Panc1 (cell line): ENCODE measurements at regions of chr20 and their contacts with region 1.

Region 1: GRCh38 chr20:34150306-34151000 is 38.4 kb upstream of the EIF2S2 start:
- DNase-seq: no peak
- ATAC-seq: no peak
- H3K4me3 ChIP-seq: no peak overlapping the region
- H3K27ac ChIP-seq: no peak overlapping the region
- H3K4me1 ChIP-seq: no peaks in the 10 kb centered on the region
- H3K27me3 ChIP-seq: no peaks in the 10 kb centered on the region
- CTCF ChIP-seq: no peak

Region 2: DNA sequence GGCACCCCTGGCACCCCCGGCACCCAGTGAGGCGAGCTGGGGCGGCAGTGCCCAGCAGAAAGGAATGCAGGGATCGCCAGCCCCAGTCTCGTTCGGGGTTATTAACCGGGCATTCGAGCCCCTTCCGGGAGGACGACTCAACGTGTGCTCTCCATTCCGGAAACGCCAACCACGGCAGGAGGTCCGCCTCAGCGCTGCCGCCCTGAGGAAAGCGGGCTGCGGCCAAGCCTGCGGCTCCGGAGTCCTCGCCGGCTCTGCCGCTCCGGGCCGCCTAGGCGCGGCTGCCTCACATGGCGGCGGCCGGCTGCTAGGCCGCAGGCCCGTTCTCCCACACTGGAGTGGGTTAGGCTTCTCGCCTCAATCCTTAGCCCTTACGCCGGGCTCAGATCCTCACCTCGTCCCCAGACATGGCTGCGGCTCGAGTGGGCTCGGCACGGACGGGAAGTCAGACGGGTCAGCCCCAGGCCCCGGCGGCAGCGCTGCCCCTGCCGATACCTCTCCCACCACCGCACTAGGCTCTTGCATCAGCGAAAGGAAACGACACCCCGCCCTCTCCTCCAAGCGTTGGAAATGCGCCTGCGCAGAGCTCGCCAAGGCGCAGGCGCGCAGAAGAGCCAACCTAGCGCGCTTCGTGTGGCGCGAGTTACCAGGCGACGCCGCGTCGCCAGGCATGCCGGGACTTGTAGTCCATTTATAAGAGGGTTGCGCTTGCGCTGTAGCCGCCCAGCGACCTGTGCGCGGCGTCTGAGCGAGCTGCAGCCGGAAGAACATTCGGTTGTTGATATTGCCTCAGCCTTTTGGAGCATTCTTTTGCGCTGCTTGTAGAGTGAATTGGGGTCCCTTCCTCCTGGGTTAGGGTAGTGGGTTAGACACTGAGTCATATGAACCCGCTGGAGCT is 38.5 kb before region 1 on chr20 and contains the start of gene EIF2S2:
- CTCF ChIA-PET with region 1: interaction called, 10 read pairs
- POLR2A ChIA-PET with region 1: no interaction called
- in situ Hi-C with region 1: no loop called
- intact Hi-C with region 1: no loop called
- DNase-seq: peak; percentile 96
- ATAC-seq: peak; percentile 96
- H3K4me3 ChIP-seq: peak within 1 kb of the TSS; percentile 79 to 99
- H3K27ac ChIP-seq: peak within 1 kb of the TSS; percentile 98
- H3K4me1 ChIP-seq: peaks cover 22% of the 10 kb centered on the region; the same call in 1 of the 2 replicates
- H3K27me3 ChIP-seq: no peaks in the 10 kb centered on the region
- CTCF ChIP-seq: no peak
- total RNA-seq, gene EIF2S2: 82.0 TPM

Region 3: DNA sequence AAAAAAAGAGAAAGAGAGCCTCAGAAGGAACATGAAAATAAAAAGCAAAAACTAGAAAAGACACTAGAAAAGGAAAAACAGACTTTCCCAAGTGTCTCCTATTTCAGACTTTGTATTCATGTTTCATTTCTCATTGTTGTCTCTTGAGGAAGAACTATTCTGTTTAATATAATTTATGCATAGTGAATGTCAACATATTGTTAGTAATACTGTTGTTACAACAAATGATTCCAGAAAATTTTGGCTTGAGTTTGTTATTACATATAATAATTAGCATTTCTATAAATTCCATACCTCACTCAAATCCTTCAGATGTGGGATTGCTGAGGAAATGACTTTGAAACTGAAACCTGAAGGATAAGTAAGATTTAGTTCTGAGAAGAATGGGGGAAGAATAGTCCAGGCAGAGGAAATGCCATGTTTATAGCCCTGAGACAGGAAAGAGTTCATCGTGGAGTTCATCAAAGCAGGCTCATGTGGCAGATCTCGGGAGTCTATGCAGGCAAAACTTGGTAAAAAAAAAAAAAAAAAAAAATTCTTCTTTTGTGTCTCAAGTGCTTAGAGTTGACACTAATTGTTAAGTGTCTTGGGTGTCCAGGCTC is 14.7 kb after region 1 on chr20:
- CTCF ChIA-PET with region 1: no interaction called
- POLR2A ChIA-PET with region 1: no interaction called
- in situ Hi-C with region 1: no loop called
- intact Hi-C with region 1: no loop called
- DNase-seq: no peak
- ATAC-seq: no peak
- H3K4me3 ChIP-seq: no peak overlapping the region
- H3K27ac ChIP-seq: no peak overlapping the region
- H3K4me1 ChIP-seq: no peaks in the 10 kb centered on the region
- H3K27me3 ChIP-seq: no peaks in the 10 kb centered on the region
- CTCF ChIP-seq: no peak

Region 4: DNA sequence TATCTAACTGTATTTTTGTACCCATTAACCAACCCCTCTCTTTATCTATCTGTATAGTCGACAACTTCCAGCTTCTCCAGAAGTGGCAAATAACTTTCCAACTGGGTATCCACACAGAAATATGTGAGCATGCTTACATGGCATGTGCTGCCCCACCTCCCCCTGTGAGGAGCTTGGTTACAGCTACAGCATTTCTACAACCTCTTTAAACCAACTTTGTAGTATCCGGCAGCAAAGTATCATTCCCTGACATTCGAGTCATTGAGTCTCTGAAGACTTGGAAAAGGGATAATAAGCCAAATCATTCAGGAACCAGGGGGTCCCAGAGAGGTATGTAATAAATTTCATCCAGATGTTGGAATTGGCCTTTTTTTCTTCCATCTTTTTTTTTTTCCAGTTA is 42.6 kb after region 1 on chr20:
- CTCF ChIA-PET with region 1: no interaction called
- POLR2A ChIA-PET with region 1: no interaction called
- in situ Hi-C with region 1: no loop called
- intact Hi-C with region 1: no loop called
- DNase-seq: no peak
- ATAC-seq: no peak
- H3K4me3 ChIP-seq: no peak overlapping the region
- H3K27ac ChIP-seq: no peak overlapping the region
- H3K4me1 ChIP-seq: no peaks in the 10 kb centered on the region
- H3K27me3 ChIP-seq: peaks cover 7% of the 10 kb centered on the region; the same call in 1 of the 2 replicates
- CTCF ChIP-seq: no peak